PC-3 (cell line): ENCODE measurements at regions of chr14 and their contacts with region 1.

Region 1: DNA sequence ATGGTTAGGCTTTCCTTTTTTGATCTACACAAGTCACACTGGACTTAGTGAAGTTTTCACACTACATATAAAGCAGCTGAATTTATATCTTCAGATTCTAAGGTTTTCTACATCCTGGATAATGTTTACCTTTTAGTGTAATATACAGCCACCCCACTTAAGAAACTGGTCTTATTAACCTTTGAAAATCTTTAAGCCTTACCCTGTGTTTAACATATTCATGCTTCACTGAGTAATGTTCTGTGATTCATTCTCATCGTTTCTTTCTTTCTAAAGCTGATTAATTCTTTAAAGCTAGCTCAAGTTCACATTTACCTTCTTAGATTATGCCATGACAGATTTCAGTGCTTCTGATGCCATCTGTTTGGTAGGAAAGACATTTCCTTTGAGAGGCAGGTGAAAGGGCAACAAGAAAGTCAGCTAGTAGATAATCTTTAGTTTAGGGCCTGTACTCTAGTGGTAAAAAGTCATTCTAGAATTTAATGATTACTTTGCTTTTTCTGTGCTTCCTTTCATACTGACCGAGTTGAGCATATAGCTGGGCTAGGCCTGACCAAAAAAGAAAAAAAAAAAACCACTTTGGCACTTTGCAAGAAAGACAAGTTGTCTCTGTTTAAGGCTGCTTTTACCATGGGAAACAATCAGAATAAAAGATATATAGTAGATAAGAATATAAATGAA is 690.9 kb upstream of the FBXO33 start:
- DNase-seq: peak; percentile 83
- ATAC-seq: peak; percentile 91
- H3K4me3 ChIP-seq: peak overlapping the region; percentile 37; the same call in 1 of the 2 replicates
- H3K27ac ChIP-seq: peak overlapping the region; percentile 71
- H3K4me1 ChIP-seq: peaks cover 29% of the 10 kb centered on the region
- H3K27me3 ChIP-seq: no peaks in the 10 kb centered on the region
- CTCF ChIP-seq: no peak

Region 2: DNA sequence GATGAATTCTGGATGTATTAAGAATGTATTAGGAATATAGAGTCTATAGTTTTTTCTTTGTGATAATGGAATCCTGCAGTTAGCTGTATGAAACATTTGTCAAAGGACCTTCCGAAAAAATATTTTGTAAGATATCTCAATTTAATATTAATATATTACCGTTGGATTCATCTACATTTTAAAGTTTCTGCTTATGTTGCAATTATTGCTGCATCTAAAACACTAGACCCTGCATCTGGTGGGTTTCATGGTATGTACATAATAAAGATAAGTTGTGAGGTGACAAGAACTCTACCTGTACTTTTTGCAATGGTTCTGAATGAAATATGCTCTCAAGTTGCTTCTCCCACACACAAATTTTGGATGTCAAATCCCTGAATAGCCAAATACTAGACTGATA is 125.0 kb before region 1 on chr14:
- CTCF ChIA-PET with region 1: no interaction called
- POLR2A ChIA-PET with region 1: no interaction called
- intact Hi-C with region 1: loop called (anchors 5 kb)
- DNase-seq: no peak
- ATAC-seq: no peak
- H3K4me3 ChIP-seq: no peak overlapping the region
- H3K27ac ChIP-seq: no peak overlapping the region
- H3K4me1 ChIP-seq: no peaks in the 10 kb centered on the region
- H3K27me3 ChIP-seq: no peaks in the 10 kb centered on the region
- CTCF ChIP-seq: no peak

Region 3: GRCh38 chr14:40164083-40164482 is 41.0 kb after region 1 on chr14:
- CTCF ChIA-PET with region 1: no interaction called
- POLR2A ChIA-PET with region 1: interaction called, 4 read pairs
- intact Hi-C with region 1: loop called (anchors 2 kb)
- DNase-seq: peak; percentile 93
- ATAC-seq: peak; percentile 98
- H3K4me3 ChIP-seq: no peak overlapping the region
- H3K27ac ChIP-seq: peak overlapping the region; percentile 66
- H3K4me1 ChIP-seq: peaks cover 21% of the 10 kb centered on the region
- H3K27me3 ChIP-seq: no peaks in the 10 kb centered on the region
- CTCF ChIP-seq: no peak

Region 4: GRCh38 chr14:40368142-40368725 is 245.1 kb after region 1 on chr14:
- CTCF ChIA-PET with region 1: no interaction called
- POLR2A ChIA-PET with region 1: no interaction called
- intact Hi-C with region 1: loop called (anchors 1 kb)
- DNase-seq: peak; percentile 87
- ATAC-seq: peak; percentile 92
- H3K4me3 ChIP-seq: no peak overlapping the region
- H3K27ac ChIP-seq: peak overlapping the region; percentile 66
- H3K4me1 ChIP-seq: peaks cover 23% of the 10 kb centered on the region
- H3K27me3 ChIP-seq: no peaks in the 10 kb centered on the region
- CTCF ChIP-seq: no peak